Activated naive CD4-positive, alpha-beta T cell treated with anti-CD3 and anti-CD28 coated beads for 36 hours (primary cell): ENCODE measurements at regions of chr4 and their contacts with region 1.

Region 1: GRCh38 chr4:167021545-167022155 is 212.6 kb downstream of the SPOCK3 start:
- DNase-seq: peak; percentile 74
- H3K4me3 Mint-ChIP-seq: no peak overlapping the region
- H3K27ac Mint-ChIP-seq: no peak overlapping the region
- H3K4me1 Mint-ChIP-seq: no peaks in the 10 kb centered on the region
- H3K27me3 Mint-ChIP-seq: peaks cover 3% of the 10 kb centered on the region

Region 2: GRCh38 chr4:165537028-165537648 is 1484.5 kb before region 1 on chr4:
- CTCF ChIA-PET with region 1: no interaction called
- intact Hi-C with region 1: loop called (anchors 5 kb)
- DNase-seq: no peak
- H3K4me3 Mint-ChIP-seq: no peak overlapping the region
- H3K27ac Mint-ChIP-seq: no peak overlapping the region
- H3K4me1 Mint-ChIP-seq: no peaks in the 10 kb centered on the region
- H3K27me3 Mint-ChIP-seq: peaks cover 6% of the 10 kb centered on the region

Region 3: DNA sequence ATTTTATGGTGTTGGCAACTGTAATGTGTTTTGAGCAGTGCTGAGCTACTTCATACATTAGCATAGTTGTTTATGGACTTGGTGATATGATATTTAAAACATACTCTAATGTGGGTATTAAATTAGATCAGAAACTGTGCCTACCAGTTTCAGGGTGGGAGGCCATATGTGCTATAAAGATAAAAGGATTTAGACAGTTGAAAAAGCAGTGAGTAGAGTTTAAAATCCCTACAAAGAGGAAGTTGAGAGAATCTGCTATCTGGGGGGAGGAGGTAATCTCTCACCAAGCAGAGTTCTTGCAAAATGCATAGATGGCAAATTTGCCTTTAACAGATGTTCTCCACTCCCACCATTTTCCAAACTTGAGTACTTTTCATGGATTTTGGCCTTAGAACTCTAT is 58.1 kb after region 1 on chr4:
- CTCF ChIA-PET with region 1: no interaction called
- intact Hi-C with region 1: no loop called
- DNase-seq: no peak
- H3K4me3 Mint-ChIP-seq: no peak overlapping the region
- H3K27ac Mint-ChIP-seq: no peak overlapping the region
- H3K4me1 Mint-ChIP-seq: no peaks in the 10 kb centered on the region
- H3K27me3 Mint-ChIP-seq: no peaks in the 10 kb centered on the region

Region 4: GRCh38 chr4:167290678-167291077 is 269.0 kb after region 1 on chr4:
- CTCF ChIA-PET with region 1: interaction called, 3 read pairs
- intact Hi-C with region 1: loop called (anchors 5 kb)
- DNase-seq: no peak
- H3K4me3 Mint-ChIP-seq: no peak overlapping the region
- H3K27ac Mint-ChIP-seq: no peak overlapping the region
- H3K4me1 Mint-ChIP-seq: no peaks in the 10 kb centered on the region
- H3K27me3 Mint-ChIP-seq: no peaks in the 10 kb centered on the region

Region 5: GRCh38 chr4:167622481-167623246 is 601.0 kb after region 1 on chr4:
- CTCF ChIA-PET with region 1: no interaction called
- intact Hi-C with region 1: loop called (anchors 1 kb)
- DNase-seq: peak; percentile 45
- H3K4me3 Mint-ChIP-seq: no peak overlapping the region
- H3K27ac Mint-ChIP-seq: no peak overlapping the region
- H3K4me1 Mint-ChIP-seq: no peaks in the 10 kb centered on the region
- H3K27me3 Mint-ChIP-seq: no peaks in the 10 kb centered on the region

Region 6: GRCh38 chr4:168076989-168077725 is 1055.5 kb after region 1 on chr4:
- CTCF ChIA-PET with region 1: no interaction called
- intact Hi-C with region 1: loop called (anchors 1 kb)
- DNase-seq: peak; percentile 76
- H3K4me3 Mint-ChIP-seq: no peak overlapping the region
- H3K27ac Mint-ChIP-seq: no peak overlapping the region
- H3K4me1 Mint-ChIP-seq: no peaks in the 10 kb centered on the region
- H3K27me3 Mint-ChIP-seq: no peaks in the 10 kb centered on the region

Region 7: GRCh38 chr4:168153596-168154440 is 1132.2 kb after region 1 on chr4:
- CTCF ChIA-PET with region 1: interaction called, 4 read pairs
- intact Hi-C with region 1: loop called (anchors 1 kb)
- DNase-seq: peak; percentile 67
- H3K4me3 Mint-ChIP-seq: no peak overlapping the region
- H3K27ac Mint-ChIP-seq: no peak overlapping the region
- H3K4me1 Mint-ChIP-seq: peaks cover 5% of the 10 kb centered on the region
- H3K27me3 Mint-ChIP-seq: no peaks in the 10 kb centered on the region